ENCODE measurements at regions of chr18 and their contacts with region 1.

Region 1: GRCh38 chr18:323253-323622 is 55.4 kb upstream of the THOC1 start:
- DNase-seq: peak; percentile 63 to 70
- H3K4me3 ChIP-seq: no peak overlapping the region
- H3K4me3 Mint-ChIP-seq: peak overlapping the region; percentile 52
- H3K27ac Mint-ChIP-seq: peak overlapping the region; percentile 96
- H3K4me1 ChIP-seq: peaks cover 35% of the 10 kb centered on the region
- H3K4me1 Mint-ChIP-seq: peaks cover 21% of the 10 kb centered on the region
- H3K27me3 ChIP-seq: no peaks in the 10 kb centered on the region
- H3K27me3 Mint-ChIP-seq: no peaks in the 10 kb centered on the region
- CTCF ChIP-seq: no peak

Region 2: GRCh38 chr18:293536-293935 is 29.7 kb before region 1 on chr18:
- CTCF ChIA-PET with region 1: no interaction called
- POLR2A ChIA-PET with region 1: no interaction called
- intact Hi-C with region 1: loop called (anchors 2 kb)
- DNase-seq: no peak
- H3K4me3 ChIP-seq: no peak overlapping the region
- H3K4me3 Mint-ChIP-seq: no peak overlapping the region
- H3K27ac Mint-ChIP-seq: no peak overlapping the region
- H3K4me1 ChIP-seq: no peaks in the 10 kb centered on the region
- H3K4me1 Mint-ChIP-seq: no peaks in the 10 kb centered on the region
- H3K27me3 ChIP-seq: no peaks in the 10 kb centered on the region
- H3K27me3 Mint-ChIP-seq: no peaks in the 10 kb centered on the region
- CTCF ChIP-seq: no peak

Region 3: GRCh38 chr18:361939-362309 is 38.7 kb after region 1 on chr18:
- CTCF ChIA-PET with region 1: no interaction called
- POLR2A ChIA-PET with region 1: no interaction called
- intact Hi-C with region 1: loop called (anchors 1 kb)
- DNase-seq: peak; percentile 55 to 77
- H3K4me3 ChIP-seq: no peak overlapping the region
- H3K4me3 Mint-ChIP-seq: peak overlapping the region; percentile 51
- H3K27ac Mint-ChIP-seq: peak overlapping the region; percentile 86
- H3K4me1 ChIP-seq: peaks cover 29% of the 10 kb centered on the region
- H3K4me1 Mint-ChIP-seq: peaks cover 43% of the 10 kb centered on the region
- H3K27me3 ChIP-seq: no peaks in the 10 kb centered on the region
- H3K27me3 Mint-ChIP-seq: no peaks in the 10 kb centered on the region
- CTCF ChIP-seq: no peak

Region 4: DNA sequence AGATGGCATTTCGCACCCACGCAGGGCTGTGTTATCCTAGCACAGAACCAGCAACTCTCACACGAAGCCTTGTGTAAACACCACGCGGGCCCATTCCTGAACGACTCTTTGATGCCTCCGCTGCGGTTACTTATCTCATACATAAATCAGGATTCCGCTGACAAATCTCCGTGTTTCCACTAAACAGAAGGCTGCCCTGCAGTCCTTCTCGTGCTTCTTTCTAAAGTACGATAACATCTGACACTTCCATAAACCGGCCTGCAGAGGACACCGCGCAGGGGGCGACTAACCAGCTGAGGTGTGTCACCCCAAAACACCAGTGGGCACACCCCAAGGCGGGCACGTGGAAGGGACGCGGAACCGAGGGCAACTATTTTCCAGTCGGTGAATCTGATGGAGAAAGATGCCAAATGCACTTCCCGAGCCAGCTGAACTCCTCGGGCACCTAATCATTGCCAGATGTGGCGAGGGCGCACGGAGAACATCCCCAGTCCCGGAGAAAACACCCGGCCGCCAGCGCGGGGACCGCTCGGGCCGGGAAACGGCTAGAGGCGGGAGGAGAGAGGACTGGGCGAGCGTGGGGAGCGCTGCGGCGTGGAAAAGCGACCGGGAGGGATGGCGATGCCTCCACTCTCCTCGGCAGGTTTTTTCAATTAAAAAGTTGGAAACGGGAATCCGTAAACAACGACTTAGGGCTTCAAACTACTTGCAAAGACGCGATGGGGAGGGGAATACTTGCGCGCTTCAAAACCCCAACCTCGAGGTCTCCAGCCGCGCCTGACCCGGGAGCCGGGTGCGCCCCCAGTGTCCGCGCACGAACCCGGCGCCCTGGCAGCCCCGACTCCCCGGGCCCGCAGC is 176.5 kb after region 1 on chr18:
- CTCF ChIA-PET with region 1: no interaction called
- POLR2A ChIA-PET with region 1: no interaction called
- intact Hi-C with region 1: loop called (anchors 5 kb)
- DNase-seq: peak; percentile 82 to 89
- H3K4me3 ChIP-seq: peak overlapping the region; percentile 37
- H3K4me3 Mint-ChIP-seq: peak overlapping the region; percentile 79
- H3K27ac Mint-ChIP-seq: peak overlapping the region; percentile 85
- H3K4me1 ChIP-seq: peaks cover 44% of the 10 kb centered on the region
- H3K4me1 Mint-ChIP-seq: peaks cover 27% of the 10 kb centered on the region
- H3K27me3 ChIP-seq: no peaks in the 10 kb centered on the region
- H3K27me3 Mint-ChIP-seq: no peaks in the 10 kb centered on the region
- CTCF ChIP-seq: peak in 1 of 2 experiments; percentile 8

Region 5: DNA sequence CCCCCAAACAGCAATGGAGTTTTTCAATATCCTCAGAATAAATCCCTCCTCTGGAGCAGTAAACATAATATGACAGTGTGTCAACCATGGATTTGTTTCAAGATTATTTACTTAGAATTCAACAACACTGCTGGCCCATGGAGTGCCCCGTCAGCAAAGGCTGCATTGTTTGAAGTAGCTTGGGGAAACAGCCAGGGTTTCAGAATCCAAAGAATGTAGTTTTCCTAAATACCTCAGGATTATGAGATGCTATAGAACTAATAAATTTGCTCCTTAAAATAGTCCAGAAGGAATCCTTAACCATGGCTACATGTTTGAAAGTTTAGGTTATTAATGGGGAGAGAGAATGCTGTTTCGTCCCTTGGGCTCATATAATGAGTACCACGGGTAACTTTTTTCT is 243.9 kb after region 1 on chr18:
- CTCF ChIA-PET with region 1: no interaction called
- POLR2A ChIA-PET with region 1: no interaction called
- intact Hi-C with region 1: no loop called
- DNase-seq: peak in 1 of 2 experiments; percentile 36
- H3K4me3 ChIP-seq: no peak overlapping the region
- H3K4me3 Mint-ChIP-seq: no peak overlapping the region
- H3K27ac Mint-ChIP-seq: peak overlapping the region; percentile 25
- H3K4me1 ChIP-seq: peaks cover 23% of the 10 kb centered on the region
- H3K4me1 Mint-ChIP-seq: no peaks in the 10 kb centered on the region
- H3K27me3 ChIP-seq: no peaks in the 10 kb centered on the region
- H3K27me3 Mint-ChIP-seq: no peaks in the 10 kb centered on the region
- CTCF ChIP-seq: no peak

Measured in Caco-2 (cell line).